AG04450 (cell line): ENCODE measurements at regions of chr1 and their contacts with region 1.

Region 1: DNA sequence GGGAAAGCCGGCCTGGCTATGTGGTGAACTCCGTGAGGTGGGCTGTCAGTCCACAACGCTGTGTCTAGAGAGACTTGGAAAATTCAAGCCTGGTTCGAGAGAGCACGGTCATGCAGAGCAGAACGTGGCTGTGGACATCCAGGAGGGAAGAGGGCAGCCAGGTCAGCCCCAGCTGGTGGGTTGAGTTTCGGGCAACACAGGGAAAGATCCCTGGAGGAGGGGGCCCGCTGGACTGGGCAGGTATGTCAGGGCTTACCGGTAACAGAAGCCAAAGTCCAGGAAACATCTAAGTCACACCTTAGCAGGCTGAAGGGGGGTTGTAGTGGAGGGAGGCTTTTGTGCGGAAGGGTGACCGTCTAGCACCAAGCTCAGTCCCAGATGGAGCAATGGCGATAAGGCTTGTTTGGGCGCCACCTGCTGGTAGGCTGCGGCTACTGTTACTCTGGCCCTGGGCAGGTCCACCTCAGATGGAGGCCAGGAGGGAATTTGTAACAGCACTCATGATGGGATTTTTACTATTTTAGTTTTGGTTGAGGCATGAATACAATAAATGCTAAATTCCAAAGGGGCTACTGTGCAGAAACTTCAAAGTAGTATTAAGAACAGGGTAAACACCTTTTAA is 143.3 kb upstream of the ZNF644 start:
- DNase-seq: peak; percentile 10
- H3K4me3 ChIP-seq: no peak overlapping the region
- H3K27ac ChIP-seq: no peak overlapping the region
- H3K27me3 ChIP-seq: no peaks in the 10 kb centered on the region
- CTCF ChIP-seq: peak; percentile 96

Region 2: DNA sequence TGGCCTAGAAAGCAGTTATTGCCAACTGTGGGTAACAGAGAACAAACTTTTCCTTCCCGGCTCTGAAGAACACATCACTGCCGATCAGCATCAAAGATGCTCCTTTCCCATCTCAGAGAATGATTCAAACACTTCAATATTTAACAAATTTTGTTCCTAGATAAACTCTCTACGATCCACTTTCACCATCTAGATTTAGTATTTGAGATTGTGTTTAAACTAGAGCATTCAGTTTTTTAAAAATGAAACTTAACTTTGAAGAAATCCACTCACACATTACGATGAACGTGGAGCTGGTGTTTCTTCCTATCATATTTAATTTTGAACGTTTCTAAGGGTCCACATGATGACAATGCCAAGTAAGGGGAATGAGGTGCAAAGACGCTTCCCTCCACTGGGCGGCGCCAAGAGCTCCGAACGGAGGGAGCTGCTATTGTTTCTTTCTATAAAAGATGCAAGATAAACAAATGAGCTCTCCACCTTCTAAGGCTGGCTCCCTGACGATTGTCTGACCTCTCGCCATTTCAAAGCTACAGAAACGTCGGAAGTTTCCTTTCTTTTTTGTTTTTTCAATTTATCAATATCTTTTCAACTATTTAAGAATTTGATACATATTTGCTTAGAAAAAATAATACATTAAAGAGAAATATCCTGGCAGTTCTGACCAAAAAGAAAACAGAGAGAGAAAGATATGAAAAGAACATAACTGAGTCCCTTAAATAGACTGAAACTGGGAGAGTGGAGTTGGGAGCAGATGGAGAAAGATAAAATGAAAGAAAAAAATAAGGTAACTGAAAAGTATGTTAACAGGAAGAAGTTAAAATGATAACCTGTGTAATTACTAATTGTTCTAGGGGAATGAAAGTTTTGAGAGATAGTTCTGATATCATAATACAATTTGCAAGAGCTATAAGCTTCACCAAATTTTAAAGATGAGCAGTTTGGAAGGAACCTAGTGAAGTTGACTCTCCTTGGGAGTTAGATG is 443.6 kb before region 1 on chr1:
- CTCF ChIA-PET with region 1: interaction called, 56 read pairs
- POLR2A ChIA-PET with region 1: no interaction called
- DNase-seq: peak; percentile 7
- H3K4me3 ChIP-seq: no peak overlapping the region
- H3K27ac ChIP-seq: no peak overlapping the region
- H3K27me3 ChIP-seq: peaks cover 82% of the 10 kb centered on the region
- CTCF ChIP-seq: peak; percentile 93

Region 3: DNA sequence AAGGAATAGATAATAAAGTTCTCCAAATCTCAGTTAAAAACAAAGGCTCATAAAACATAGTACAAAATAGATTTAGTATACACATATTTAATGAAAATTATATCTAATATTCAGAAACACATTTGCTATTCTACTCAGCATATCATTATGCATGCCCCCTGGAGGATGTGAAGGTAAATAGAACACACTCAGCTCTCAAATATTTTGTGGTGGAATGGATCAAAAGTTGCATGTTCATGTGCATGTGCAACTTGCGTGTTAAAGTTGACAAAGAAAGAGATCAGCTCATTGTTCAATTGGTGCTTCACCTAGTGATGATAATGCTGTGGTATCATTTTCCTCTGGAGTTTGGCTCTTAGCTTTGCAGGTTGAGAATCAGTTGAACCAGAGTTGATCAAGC is 138.4 kb before region 1 on chr1:
- CTCF ChIA-PET with region 1: interaction called, 10 read pairs
- POLR2A ChIA-PET with region 1: interaction called, 3 read pairs
- DNase-seq: no peak
- H3K4me3 ChIP-seq: no peak overlapping the region
- H3K27ac ChIP-seq: no peak overlapping the region
- H3K27me3 ChIP-seq: no peaks in the 10 kb centered on the region
- CTCF ChIP-seq: peak; percentile 43

Region 4: GRCh38 chr1:91141858-91142257 is 23.3 kb before region 1 on chr1:
- CTCF ChIA-PET with region 1: interaction called, 26 read pairs
- POLR2A ChIA-PET with region 1: no interaction called
- DNase-seq: no peak
- H3K4me3 ChIP-seq: no peak overlapping the region
- H3K27ac ChIP-seq: no peak overlapping the region
- H3K27me3 ChIP-seq: no peaks in the 10 kb centered on the region
- CTCF ChIP-seq: no peak

Region 5: GRCh38 chr1:91201176-91201575 is 36.0 kb after region 1 on chr1:
- CTCF ChIA-PET with region 1: interaction called, 16 read pairs
- POLR2A ChIA-PET with region 1: no interaction called
- DNase-seq: no peak
- H3K4me3 ChIP-seq: no peak overlapping the region
- H3K27ac ChIP-seq: no peak overlapping the region
- H3K27me3 ChIP-seq: no peaks in the 10 kb centered on the region
- CTCF ChIP-seq: no peak

Region 6: GRCh38 chr1:91273875-91274274 is 108.7 kb after region 1 on chr1:
- CTCF ChIA-PET with region 1: interaction called, 147 read pairs
- POLR2A ChIA-PET with region 1: no interaction called
- DNase-seq: no peak
- H3K4me3 ChIP-seq: no peak overlapping the region
- H3K27ac ChIP-seq: no peak overlapping the region
- H3K27me3 ChIP-seq: no peaks in the 10 kb centered on the region
- CTCF ChIP-seq: no peak